AG04449 (cell line): ENCODE measurements at regions of chr11 and their contacts with region 1.

Region 1: DNA sequence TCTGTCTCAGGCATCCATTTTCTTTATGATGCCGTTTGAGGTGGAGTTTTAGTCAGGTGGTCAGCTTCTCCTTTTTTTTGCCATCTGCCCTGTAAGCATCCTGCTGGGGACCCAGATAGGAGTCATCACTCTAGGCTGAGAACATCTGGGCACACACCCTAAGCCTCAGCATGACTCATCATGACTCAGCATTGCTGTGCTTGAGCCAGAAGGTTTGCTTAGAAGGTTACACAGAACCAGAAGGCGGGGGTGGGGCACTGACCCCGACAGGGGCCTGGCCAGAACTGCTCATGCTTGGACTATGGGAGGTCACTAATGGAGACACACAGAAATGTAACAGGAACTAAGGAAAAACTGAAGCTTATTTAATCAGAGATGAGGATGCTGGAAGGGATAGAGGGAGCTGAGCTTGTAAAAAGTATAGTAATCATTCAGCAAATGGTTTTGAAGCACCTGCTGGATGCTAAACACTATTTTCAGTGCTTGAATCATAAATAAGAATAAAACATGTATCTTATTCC is 10.9 kb upstream of the HBE1 start:
- DNase-seq: peak; percentile 85
- H3K4me3 ChIP-seq: no peak overlapping the region
- CTCF ChIP-seq: no peak

Region 2: GRCh38 chr11:5242933-5243815 is 37.5 kb before region 1 on chr11:
- CTCF ChIA-PET with region 1: no interaction called
- POLR2A ChIA-PET with region 1: no interaction called
- DNase-seq: no peak
- H3K4me3 ChIP-seq: no peak overlapping the region
- CTCF ChIP-seq: no peak

Region 3: GRCh38 chr11:5291207-5291838 is 10.7 kb after region 1 on chr11:
- CTCF ChIA-PET with region 1: interaction called, 10 read pairs
- POLR2A ChIA-PET with region 1: interaction called, 12 read pairs
- DNase-seq: no peak
- H3K4me3 ChIP-seq: no peak overlapping the region
- CTCF ChIP-seq: peak; percentile 45

Region 4: GRCh38 chr11:5553347-5553746 is 272.7 kb after region 1 on chr11:
- CTCF ChIA-PET with region 1: no interaction called
- POLR2A ChIA-PET with region 1: no interaction called
- DNase-seq: no peak
- H3K4me3 ChIP-seq: no peak overlapping the region
- CTCF ChIP-seq: no peak